GM18951 (cell line): ENCODE measurements at regions of chr18 and their contacts with region 1.

Region 1: GRCh38 chr18:49500201-49500921 is 13.3 kb upstream of the C18orf32 start:
- POLR2A ChIP-seq: no peak

Region 2: GRCh38 chr18:48875942-48876511 is 624.3 kb before region 1 on chr18:
- in situ Hi-C with region 1: no loop called
- POLR2A ChIP-seq: no peak

Region 3: DNA sequence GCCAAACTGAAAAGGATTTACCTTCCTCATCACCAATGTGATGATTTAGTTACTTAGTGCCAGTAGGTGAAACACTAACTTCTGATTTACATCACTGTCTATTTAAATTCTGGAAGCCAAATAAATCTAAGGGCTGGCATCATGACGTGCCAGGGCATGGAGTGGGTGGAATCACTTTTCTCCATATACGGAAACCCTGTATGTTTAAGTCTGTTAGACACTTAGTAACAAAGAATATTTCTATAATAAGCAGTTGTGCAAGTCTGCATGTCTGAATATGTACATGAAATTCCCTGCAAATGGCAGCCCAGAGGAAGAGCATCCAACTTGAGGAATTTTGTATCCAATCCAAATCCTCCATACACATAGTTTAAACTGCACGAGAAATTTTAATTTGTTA is 306.5 kb before region 1 on chr18:
- in situ Hi-C with region 1: no loop called
- POLR2A ChIP-seq: no peak

Region 4: GRCh38 chr18:49238433-49239042 is 261.8 kb before region 1 on chr18:
- in situ Hi-C with region 1: no loop called
- POLR2A ChIP-seq: no peak

Region 5: DNA sequence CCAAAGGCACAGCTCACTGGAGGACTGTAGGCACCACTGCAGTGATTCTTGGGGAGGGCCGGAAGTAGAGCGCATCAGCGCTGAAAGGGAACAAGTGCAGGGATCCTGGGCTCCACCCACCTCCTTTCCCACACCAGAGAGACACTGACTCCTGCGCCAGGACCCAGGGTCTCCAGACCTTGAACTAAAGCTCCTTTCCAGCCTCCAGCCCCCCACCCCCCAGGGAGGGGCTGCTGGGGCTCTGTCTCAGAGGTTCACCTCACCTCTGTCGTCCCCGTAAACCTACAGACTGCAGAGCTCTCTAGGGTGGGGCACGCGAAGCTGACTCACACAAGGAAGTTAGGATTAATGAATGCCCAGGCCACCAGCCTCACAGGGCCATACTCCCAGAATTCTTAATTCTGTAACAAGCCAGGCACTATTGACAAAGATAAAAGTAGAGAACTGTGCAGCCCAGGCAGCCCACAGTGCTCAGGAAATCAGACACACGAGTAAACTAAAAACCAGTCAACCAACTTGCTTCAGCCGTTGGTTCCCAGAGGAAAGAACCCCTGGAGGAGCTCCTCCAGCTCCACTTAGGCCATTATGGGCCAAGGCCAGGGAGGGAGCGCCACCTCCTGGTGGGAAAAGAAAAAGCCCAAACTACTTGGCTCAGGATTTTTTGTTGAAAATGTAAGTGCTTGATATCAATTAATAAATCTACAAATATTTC is 358.1 kb after region 1 on chr18:
- in situ Hi-C with region 1: loop called (anchors 10 kb)
- POLR2A ChIP-seq: no peak

Region 6: DNA sequence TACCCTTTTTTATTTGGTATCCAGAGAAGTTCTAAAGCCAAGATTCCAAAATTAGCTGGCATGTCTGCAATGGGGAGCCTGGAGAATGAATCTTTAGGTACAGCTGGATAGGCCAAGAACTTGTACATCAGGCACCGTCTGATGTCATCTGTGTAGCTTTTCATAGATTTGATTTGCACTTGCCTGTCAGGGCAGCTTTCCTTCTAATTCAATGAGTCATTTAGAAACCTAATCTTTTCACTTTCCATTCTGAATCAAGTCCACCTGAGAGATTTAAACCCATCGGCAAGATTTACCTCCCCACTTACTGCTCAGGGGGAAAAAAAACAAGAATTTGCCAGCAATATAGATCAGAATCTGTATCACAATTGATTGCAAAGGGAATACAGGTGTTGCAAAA is 373.9 kb after region 1 on chr18:
- in situ Hi-C with region 1: no loop called
- POLR2A ChIP-seq: no peak